GM18951 (cell line): ENCODE measurements at regions of chr1 and their contacts with region 1.

Region 1: GRCh38 chr1:193019442-193020026 is 39.6 kb downstream of the UCHL5 start:
- POLR2A ChIP-seq: no peak

Region 2: DNA sequence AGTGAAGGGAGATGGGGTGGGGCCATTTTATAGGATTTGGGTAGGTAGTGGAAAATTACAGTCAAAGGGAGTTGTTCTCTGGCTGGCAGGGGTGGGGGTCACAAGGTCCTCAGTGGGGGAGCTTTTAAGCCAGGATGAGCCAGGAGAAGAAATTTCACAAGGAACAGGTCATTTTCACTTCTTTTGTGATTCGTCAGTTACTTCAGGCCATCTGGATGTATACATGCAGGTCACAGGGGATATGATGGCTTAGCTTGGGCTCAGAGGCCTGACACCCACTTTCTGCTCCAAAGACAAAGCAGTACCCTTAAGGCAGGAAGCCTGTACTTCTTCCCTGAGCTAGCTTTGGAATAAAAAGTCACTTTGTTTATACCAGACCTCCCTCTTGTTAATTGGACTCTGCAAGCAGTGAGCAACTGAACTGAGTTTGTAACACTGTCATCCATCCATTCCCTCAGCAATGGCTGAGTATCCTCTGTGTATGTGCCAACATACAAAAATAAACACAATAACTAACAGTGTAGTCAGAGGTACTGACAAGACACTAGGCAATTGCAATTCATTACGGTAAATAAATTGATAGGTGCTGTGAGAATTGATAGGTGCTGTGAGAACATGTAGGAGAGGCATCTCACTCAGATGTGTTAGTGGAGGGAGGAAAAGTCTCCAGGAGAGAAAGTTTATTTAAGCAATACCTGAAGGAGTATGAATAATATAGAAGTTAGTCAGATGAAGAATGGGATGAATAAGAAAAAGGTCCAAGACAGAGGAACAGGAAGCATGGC is 225.4 kb before region 1 on chr1:
- in situ Hi-C with region 1: loop called (anchors 10 kb)
- POLR2A ChIP-seq: no peak

Region 3: GRCh38 chr1:192826791-192827477 is 192.6 kb before region 1 on chr1:
- in situ Hi-C with region 1: no loop called
- POLR2A ChIP-seq: no peak